AG04449 (cell line): ENCODE measurements at regions of chr19 and their contacts with region 1.

Region 1: DNA sequence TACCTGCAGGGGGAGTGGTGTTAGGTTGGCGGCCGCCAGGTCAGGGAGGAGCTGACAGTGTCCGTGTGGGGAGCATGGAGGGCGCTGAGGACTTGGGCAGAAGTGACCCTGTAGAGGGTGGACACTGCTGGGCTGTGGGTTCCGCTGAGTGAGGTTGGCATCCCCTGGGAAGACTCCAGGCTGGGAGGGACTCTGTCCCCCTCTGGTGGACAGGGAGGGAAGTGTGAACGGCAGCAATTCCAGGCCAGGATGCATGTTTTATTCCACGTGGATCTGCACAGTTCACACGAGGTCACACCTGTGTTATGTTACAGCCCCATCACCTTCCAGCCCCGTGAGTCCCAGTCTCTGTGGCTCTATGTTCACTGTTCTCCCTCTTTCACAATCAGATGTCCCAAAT is 1.7 kb upstream of the PSG1 start:
- DNase-seq: no peak
- H3K4me3 ChIP-seq: no peak overlapping the region
- CTCF ChIP-seq: peak; percentile 33

Region 2: DNA sequence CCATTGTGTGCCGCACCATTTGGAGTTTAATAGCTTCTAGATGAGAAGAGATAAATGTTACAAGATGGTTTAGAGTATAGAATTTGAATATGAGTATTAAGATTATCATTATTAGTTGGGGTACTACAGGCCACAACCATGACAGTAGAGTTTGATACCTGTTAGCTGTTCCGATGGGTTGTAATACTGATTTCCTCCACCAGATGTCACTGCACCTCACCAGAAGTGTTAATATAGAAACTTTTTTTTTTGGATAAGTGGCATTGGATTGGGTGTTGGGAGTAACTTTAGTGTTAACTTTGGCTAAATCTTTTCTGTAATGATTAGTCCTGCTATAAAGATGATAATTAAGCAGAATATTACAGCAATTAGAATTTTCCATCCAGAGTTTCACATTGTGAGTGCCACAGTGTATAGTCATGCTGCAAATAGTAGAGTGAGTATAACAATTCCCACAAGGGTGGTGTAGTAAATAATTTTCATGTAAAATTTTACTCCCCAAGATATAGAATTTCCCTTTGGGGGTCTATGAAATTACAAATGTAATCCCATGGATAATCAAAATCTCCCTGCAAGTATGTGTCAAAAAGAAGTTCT is 197.2 kb before region 1 on chr19:
- CTCF ChIA-PET with region 1: interaction called, 10 read pairs
- POLR2A ChIA-PET with region 1: no interaction called
- DNase-seq: no peak
- H3K4me3 ChIP-seq: no peak overlapping the region
- CTCF ChIP-seq: peak; percentile 46